A549 (cell line): ENCODE measurements at regions of chr10 and their contacts with region 1.

Region 1: DNA sequence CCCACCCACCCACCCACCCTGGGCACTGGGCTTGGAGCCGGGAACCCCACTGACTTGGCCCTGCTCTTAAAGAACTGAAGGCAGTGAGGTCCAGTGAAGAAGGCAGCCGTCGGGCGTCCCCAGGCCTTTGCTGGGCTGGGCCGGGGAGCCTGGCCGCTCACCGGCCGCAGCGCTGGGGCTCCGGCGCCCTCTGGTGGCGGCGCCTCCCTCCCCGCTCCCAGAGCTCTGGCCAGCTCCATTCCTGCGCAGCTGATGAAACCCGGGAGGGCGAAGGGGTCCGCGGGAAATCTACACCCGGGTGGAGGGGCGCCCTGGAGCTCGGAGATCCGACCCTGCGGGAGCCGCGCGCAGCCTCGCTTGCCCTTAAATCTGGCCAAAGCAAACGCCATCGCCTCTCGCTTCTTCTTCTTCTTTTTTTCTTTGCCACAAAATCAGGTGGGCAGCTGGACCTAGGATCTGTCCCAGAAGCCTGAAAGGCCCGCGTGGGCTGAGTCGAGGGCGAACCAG is 1.7 kb upstream of the CXCL12 start:
- DNase-seq: peak; percentile 48 to 57
- ATAC-seq: peak; percentile 89 to 98
- H3K4me3 ChIP-seq: no peak overlapping the region
- H3K27ac ChIP-seq: no peak overlapping the region
- H3K4me1 ChIP-seq: no peaks in the 10 kb centered on the region
- CTCF ChIP-seq: peak; percentile 69
- EP300 ChIP-seq: no peak
- POLR2A ChIP-seq: no peak
- RAD21 ChIP-seq: peak; percentile 71 to 86

Region 2: GRCh38 chr10:43671656-43672531 is 714.7 kb before region 1 on chr10:
- CTCF ChIA-PET with region 1: interaction called, 18 read pairs
- POLR2A ChIA-PET with region 1: no interaction called
- DNase-seq: peak; percentile 70 to 80
- ATAC-seq: peak; percentile 65 to 85; a peak in 5 of 6 replicates
- H3K4me3 ChIP-seq: no peak overlapping the region
- H3K27ac ChIP-seq: no peak overlapping the region
- H3K4me1 ChIP-seq: no peaks in the 10 kb centered on the region
- CTCF ChIP-seq: peak; percentile 79
- EP300 ChIP-seq: no peak
- POLR2A ChIP-seq: no peak
- RAD21 ChIP-seq: peak; percentile 87 to 91

Region 3: GRCh38 chr10:44398747-44399658 is 12.4 kb after region 1 on chr10:
- CTCF ChIA-PET with region 1: interaction called, 18 read pairs
- POLR2A ChIA-PET with region 1: no interaction called
- DNase-seq: no peak
- ATAC-seq: peak in 1 of 2 experiments; percentile 47; a peak in 1 of 6 replicates
- H3K4me3 ChIP-seq: no peak overlapping the region
- H3K27ac ChIP-seq: no peak overlapping the region
- H3K4me1 ChIP-seq: no peaks in the 10 kb centered on the region
- CTCF ChIP-seq: no peak
- EP300 ChIP-seq: no peak
- POLR2A ChIP-seq: no peak
- RAD21 ChIP-seq: no peak

Region 4: GRCh38 chr10:44424957-44425356 is 38.4 kb after region 1 on chr10:
- CTCF ChIA-PET with region 1: no interaction called
- POLR2A ChIA-PET with region 1: no interaction called
- DNase-seq: no peak
- ATAC-seq: no peak
- H3K4me3 ChIP-seq: no peak overlapping the region
- H3K27ac ChIP-seq: no peak overlapping the region
- H3K4me1 ChIP-seq: no peaks in the 10 kb centered on the region
- CTCF ChIP-seq: no peak
- EP300 ChIP-seq: no peak
- POLR2A ChIP-seq: no peak
- RAD21 ChIP-seq: no peak